CD4-positive, alpha-beta memory T cell (primary cell): ENCODE measurements at regions of chr4 and their contacts with region 1.

Region 1: GRCh38 chr4:185640811-185641675 is 105.7 kb upstream of the PDLIM3 start:
- DNase-seq: peak in 2 of 5 donors; percentile 2 to 6
- H3K4me3 ChIP-seq: no peak overlapping the region
- H3K4me3 Mint-ChIP-seq: no peak overlapping the region
- H3K27ac ChIP-seq: no peak overlapping the region
- H3K27ac Mint-ChIP-seq: no peak overlapping the region
- H3K4me1 ChIP-seq: no peaks in the 10 kb centered on the region
- H3K4me1 Mint-ChIP-seq: peaks cover 0 to 8% (median 2%) of the 10 kb centered on the region in 4 donors
- H3K27me3 ChIP-seq: peaks cover 20% of the 10 kb centered on the region
- H3K27me3 Mint-ChIP-seq: peaks cover 22 to 41% of the 10 kb centered on the region in 2 donors

Region 2: DNA sequence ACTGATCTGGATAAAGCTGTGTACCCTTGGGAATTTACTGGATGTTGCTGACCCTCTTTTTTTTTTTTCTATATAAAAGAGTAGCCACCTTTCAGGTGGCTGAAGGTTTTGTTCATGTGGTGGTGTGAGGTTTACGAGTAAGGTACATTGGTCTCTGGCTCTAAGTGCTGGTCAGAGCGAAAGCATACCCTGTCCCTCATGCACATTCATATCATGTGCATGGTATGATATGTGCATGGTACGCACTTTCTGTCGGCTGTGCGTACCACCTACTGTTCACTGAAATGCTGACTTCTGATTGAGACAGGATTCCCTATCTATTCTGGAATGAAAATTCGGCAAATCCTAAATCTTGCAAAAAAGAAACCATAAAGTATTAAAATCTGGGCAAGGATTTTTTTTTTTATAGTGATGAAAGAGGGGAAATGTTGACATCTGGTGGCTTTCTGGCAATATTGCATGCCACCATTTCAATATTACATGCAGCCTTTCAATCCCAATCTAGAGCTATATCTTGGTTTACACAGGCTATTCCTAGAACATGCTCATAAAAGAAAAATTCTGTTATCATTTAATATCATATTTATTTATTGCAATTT is 496.3 kb after region 1 on chr4:
- CTCF ChIA-PET with region 1: interaction called, 6 read pairs
- POLR2A ChIA-PET with region 1: no interaction called
- intact Hi-C with region 1: loop called (anchors 5 kb)
- DNase-seq: no peak
- H3K4me3 ChIP-seq: no peak overlapping the region
- H3K4me3 Mint-ChIP-seq: no peak overlapping the region
- H3K27ac ChIP-seq: no peak overlapping the region
- H3K27ac Mint-ChIP-seq: no peak overlapping the region
- H3K4me1 ChIP-seq: no peaks in the 10 kb centered on the region
- H3K4me1 Mint-ChIP-seq: peaks cover 0 to 2% (median under 1%) of the 10 kb centered on the region in 4 donors
- H3K27me3 ChIP-seq: no peaks in the 10 kb centered on the region
- H3K27me3 Mint-ChIP-seq: peaks cover 0 to 8% of the 10 kb centered on the region in 2 donors